ENCODE measurements at regions of chr6 and their contacts with region 1.

Region 1: GRCh38 chr6:11277275-11278206 is 45.1 kb upstream of the NEDD9 start:
- DNase-seq: no peak
- H3K4me3 Mint-ChIP-seq: no peak overlapping the region
- H3K27ac Mint-ChIP-seq: peak overlapping the region; percentile 95
- H3K4me1 Mint-ChIP-seq: peaks cover 38% of the 10 kb centered on the region
- H3K27me3 Mint-ChIP-seq: no peaks in the 10 kb centered on the region

Region 2: GRCh38 chr6:11224252-11224965 is 53.1 kb before region 1 on chr6:
- intact Hi-C with region 1: loop called (anchors 2 kb)
- DNase-seq: peak; percentile 51
- H3K4me3 Mint-ChIP-seq: peak overlapping the region; percentile 38
- H3K27ac Mint-ChIP-seq: peak overlapping the region; percentile 80
- H3K4me1 Mint-ChIP-seq: peaks cover 67% of the 10 kb centered on the region
- H3K27me3 Mint-ChIP-seq: no peaks in the 10 kb centered on the region

Region 3: GRCh38 chr6:11258260-11259237 is 19.0 kb before region 1 on chr6:
- intact Hi-C with region 1: loop called (anchors 2 kb)
- DNase-seq: peak; percentile 23
- H3K4me3 Mint-ChIP-seq: no peak overlapping the region
- H3K27ac Mint-ChIP-seq: peak overlapping the region; percentile 74
- H3K4me1 Mint-ChIP-seq: peaks cover 42% of the 10 kb centered on the region
- H3K27me3 Mint-ChIP-seq: no peaks in the 10 kb centered on the region

Region 4: GRCh38 chr6:11419763-11420453 is 142.4 kb after region 1 on chr6:
- intact Hi-C with region 1: no loop called
- DNase-seq: no peak
- H3K4me3 Mint-ChIP-seq: no peak overlapping the region
- H3K27ac Mint-ChIP-seq: no peak overlapping the region
- H3K4me1 Mint-ChIP-seq: peaks cover 55% of the 10 kb centered on the region
- H3K27me3 Mint-ChIP-seq: no peaks in the 10 kb centered on the region